ENCODE measurements at regions of chr2 and their contacts with region 1.

Region 1: GRCh38 chr2:216023055-216023648 is 9.8 kb upstream of the MREG start:
- DNase-seq: no peak
- H3K4me3 ChIP-seq: no peak overlapping the region
- CTCF ChIP-seq: peak; percentile 63

Region 2: GRCh38 chr2:216039916-216040315 is 16.8 kb after region 1 on chr2:
- CTCF ChIA-PET with region 1: interaction called, 107 read pairs
- POLR2A ChIA-PET with region 1: no interaction called
- DNase-seq: no peak
- H3K4me3 ChIP-seq: no peak overlapping the region
- CTCF ChIP-seq: no peak

Region 3: GRCh38 chr2:216044883-216045486 is 21.8 kb after region 1 on chr2:
- CTCF ChIA-PET with region 1: interaction called, 13 read pairs
- POLR2A ChIA-PET with region 1: no interaction called
- DNase-seq: no peak
- H3K4me3 ChIP-seq: no peak overlapping the region
- CTCF ChIP-seq: no peak

Region 4: DNA sequence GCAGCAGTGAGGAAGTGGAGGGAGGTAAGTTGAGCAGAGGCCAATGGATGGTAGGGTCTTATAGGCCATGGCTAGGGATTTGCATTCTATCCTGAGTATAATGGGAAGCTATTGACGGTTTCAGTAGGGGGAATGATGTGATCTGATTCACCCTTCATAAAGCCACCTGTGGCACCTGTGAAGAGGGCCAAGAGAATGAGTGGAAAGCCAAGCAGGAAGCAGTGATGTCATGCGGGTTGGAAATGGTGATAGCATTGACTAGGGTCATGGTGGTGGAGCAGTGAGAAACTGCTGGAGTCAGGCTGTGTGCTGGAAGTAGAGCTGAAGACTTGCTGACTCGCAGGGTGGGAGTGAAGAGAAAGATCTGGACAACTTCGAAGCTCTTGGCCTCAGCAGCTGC is 237.5 kb after region 1 on chr2:
- CTCF ChIA-PET with region 1: no interaction called
- POLR2A ChIA-PET with region 1: no interaction called
- DNase-seq: no peak
- H3K4me3 ChIP-seq: no peak overlapping the region
- CTCF ChIP-seq: no peak

Region 5: DNA sequence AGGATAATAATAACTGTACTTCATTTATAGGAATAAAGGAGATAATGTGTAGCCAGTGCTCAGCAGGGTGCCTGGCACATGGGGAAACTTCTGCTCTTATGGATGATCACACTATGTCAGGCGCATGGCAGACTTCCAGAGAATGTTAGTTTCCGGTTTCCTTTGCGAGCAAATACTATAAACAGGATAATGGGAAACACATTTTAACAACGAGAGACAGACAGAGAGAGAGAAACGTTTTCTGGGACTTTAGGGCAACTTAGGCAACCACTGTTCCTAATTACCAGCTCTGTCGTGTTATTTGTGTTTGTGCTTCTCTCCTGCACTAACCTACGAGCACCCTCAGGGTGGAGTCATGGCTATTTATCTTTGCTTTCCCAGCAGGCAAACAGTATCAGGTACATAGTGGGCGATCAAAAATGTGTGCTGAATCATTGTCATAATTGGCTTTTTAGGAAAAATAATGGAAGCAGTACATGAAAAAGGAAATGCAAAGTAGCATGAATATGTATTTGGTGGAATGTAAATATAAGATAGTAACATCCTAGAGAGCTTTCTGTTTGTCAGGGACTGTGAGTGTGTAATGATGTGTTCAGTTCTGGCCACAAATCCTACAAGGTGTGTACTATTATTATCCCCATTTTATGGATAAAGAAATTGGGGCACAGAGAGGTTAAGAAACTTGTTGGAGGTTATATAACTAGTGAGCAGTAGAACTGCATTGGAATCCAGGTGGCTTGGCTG is 573.3 kb after region 1 on chr2:
- CTCF ChIA-PET with region 1: no interaction called
- POLR2A ChIA-PET with region 1: no interaction called
- DNase-seq: peak; percentile 31
- H3K4me3 ChIP-seq: no peak overlapping the region
- CTCF ChIP-seq: no peak